GM12878 (cell line): ENCODE measurements at regions of chr1 and their contacts with region 1.

Region 1: GRCh38 chr1:111628153-111628552 is 8.6 kb downstream of the RAP1A start:
- DNase-seq: no peak
- ATAC-seq: no peak
- H3K4me3 ChIP-seq: peak overlapping the region; percentile 36
- H3K27ac ChIP-seq: peak overlapping the region; percentile 53
- H3K4me1 ChIP-seq: peaks cover 26% of the 10 kb centered on the region; the same call in 1 of the 2 replicates
- H3K27me3 ChIP-seq: no peaks in the 10 kb centered on the region
- CTCF ChIP-seq: no peak
- EP300 ChIP-seq: no peak
- POLR2A ChIP-seq: no peak
- RAD21 ChIP-seq: no peak

Region 2: DNA sequence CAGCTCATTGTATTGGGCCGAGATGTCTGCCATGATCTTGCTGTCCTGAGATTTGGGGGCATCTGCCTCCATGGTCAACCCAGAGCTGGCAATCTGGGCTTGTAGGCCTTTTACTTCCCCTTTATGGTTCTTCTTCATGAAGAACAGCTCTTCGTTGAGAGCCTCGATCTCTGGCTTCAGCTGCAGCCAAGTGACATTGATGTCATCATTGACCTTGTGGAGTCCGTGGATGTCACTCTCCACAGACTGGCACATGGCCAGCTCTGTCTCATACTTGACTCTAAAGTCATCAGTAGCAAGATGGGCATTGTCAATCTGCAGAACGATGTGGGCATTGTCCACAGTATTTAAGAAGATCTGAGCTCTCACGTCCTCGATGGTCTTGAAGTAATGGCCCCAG is 20.7 kb after region 1 on chr1:
- CTCF ChIA-PET with region 1: interaction called, 4 read pairs
- POLR2A ChIA-PET with region 1: interaction called, 5 read pairs
- RAD21 ChIA-PET with region 1: interaction called, 3 read pairs
- SMC1A ChIA-PET with region 1: interaction called, 17 read pairs
- in situ Hi-C with region 1: no loop called
- intact Hi-C with region 1: no loop called
- DNase-seq: no peak
- ATAC-seq: no peak
- H3K4me3 ChIP-seq: no peak overlapping the region
- H3K27ac ChIP-seq: no peak overlapping the region
- H3K4me1 ChIP-seq: no peaks in the 10 kb centered on the region; the same call in 1 of the 2 replicates
- H3K27me3 ChIP-seq: no peaks in the 10 kb centered on the region
- CTCF ChIP-seq: no peak
- EP300 ChIP-seq: no peak
- POLR2A ChIP-seq: no peak; the same call in 1 of the 2 replicates
- RAD21 ChIP-seq: no peak

Region 3: DNA sequence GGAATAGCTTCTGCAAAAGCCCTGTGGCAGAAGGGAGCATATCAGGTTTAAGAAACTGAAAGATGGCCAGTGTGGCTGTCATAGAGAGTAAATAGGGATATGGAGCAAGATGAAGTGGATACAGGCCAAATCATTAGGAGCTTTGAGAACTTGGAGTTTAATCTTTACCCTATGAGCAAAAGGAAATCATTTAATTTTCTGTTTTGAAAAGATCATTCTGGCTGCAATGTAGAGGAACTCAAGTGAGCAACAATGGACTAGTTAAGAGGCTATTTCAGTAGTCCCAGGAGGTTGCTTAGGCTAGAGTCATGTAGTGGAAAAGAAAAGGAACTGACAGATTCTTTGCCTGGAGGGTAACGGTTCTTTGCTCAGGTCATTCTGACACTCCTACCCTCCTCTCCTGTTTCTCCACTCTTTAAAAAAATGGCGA is 38.7 kb after region 1 on chr1:
- CTCF ChIA-PET with region 1: interaction called, 3 read pairs
- POLR2A ChIA-PET with region 1: interaction called, 3 read pairs
- RAD21 ChIA-PET with region 1: interaction called, 3 read pairs
- SMC1A ChIA-PET with region 1: interaction called, 18 read pairs
- in situ Hi-C with region 1: no loop called
- intact Hi-C with region 1: no loop called
- DNase-seq: no peak
- ATAC-seq: no peak
- H3K4me3 ChIP-seq: no peak overlapping the region
- H3K27ac ChIP-seq: no peak overlapping the region
- H3K4me1 ChIP-seq: peaks cover 12% of the 10 kb centered on the region
- H3K27me3 ChIP-seq: no peaks in the 10 kb centered on the region
- CTCF ChIP-seq: no peak
- EP300 ChIP-seq: no peak
- POLR2A ChIP-seq: no peak
- RAD21 ChIP-seq: no peak